ENCODE measurements at regions of chr7 and their contacts with region 1.

Region 1: DNA sequence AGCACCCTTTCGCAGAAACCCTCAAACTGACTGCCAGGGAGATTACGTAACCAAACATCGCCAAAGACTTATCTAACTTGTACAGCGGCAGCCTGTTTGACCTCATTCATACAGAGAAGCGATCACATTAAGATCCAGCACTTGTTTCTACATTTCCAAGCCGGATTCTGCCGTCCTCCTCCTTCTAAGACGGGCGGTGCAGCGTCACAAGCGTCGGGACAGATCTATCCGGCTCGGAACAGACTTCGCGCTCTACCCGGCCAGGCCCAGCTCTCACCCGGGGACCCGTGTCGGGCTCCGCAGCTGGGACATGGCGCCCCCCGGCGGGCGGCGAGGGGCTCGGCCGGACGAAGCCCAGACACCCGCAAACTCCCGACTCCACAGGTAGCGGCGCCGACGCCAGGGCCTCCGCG is 373 bp downstream of the H2AZ2 start:
- DNase-seq: peak; percentile 91
- H3K4me3 Mint-ChIP-seq: peak overlapping the region; percentile 93
- H3K27ac Mint-ChIP-seq: peak overlapping the region; percentile 95
- H3K4me1 Mint-ChIP-seq: peaks cover 37% of the 10 kb centered on the region
- H3K27me3 Mint-ChIP-seq: peaks cover 2% of the 10 kb centered on the region

Region 2: DNA sequence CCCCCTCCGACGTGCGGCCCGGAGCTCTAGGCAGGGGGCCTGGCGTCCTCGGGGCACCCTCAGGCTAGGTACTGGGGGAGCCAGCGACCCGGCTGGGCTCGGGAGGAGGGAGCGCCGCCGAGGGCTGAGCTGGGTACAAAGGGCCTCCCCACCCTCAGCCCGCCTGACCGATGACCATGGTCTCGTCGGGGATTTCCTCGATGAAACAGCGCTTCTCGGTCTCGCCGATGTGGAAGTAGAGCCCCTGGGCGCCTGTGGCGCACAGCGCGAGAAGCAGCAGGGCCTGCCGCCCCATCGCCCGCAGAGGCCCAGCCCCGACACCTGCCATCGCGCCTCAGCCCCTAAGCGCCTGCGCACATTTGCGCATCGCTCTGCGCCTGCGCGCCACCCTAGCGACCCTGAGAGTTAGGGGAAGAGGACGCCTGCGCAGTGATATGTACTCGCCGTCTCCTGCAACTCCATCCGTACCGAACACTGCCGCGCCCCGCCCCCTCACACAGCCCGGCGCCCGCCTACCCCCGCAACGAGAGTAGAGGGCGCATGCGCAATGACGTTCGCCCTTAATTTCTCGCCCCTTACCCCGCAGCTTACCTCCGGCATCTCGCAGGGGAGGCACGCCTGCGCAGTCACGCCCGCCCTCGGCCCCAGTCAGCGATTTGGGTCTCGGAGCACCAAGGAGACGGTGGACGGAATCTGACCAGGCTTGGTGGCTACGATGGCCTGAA is 265.5 kb before region 1 on chr7 and contains the start of gene TMED4:
- CTCF ChIA-PET with region 1: interaction called, 9 read pairs
- POLR2A ChIA-PET with region 1: interaction called, 27 read pairs
- intact Hi-C with region 1: loop called (anchors 1 kb)
- DNase-seq: peak; percentile 100
- H3K4me3 Mint-ChIP-seq: peak within 1 kb of the TSS; percentile 91
- H3K27ac Mint-ChIP-seq: peak within 1 kb of the TSS; percentile 91
- H3K4me1 Mint-ChIP-seq: peaks cover 29% of the 10 kb centered on the region
- H3K27me3 Mint-ChIP-seq: peaks cover 3% of the 10 kb centered on the region
- total RNA-seq, gene TMED4: 74.8 to 79.1 TPM

Region 3: DNA sequence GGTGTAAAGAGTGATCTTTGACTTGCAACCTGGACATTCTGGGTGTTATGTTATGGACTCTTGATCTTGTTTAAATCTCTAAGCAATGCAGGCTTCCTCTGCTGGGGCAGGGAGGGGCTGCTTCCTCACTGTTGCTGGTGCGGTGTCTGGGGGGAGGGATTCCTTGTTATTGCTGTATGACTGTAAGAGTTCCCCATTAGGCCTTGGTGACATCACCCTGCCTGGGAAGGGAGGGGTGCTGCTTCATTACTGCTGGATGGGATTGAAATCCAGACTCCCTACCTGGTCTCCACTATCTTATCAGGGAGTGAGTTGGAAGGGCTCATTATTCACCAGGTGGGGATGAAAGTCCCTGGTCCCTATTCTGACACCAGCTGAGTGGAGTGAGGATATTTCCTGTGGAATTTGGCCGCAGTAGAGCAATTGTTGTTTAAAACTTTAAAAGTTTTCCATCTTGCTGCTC is 232.3 kb before region 1 on chr7:
- CTCF ChIA-PET with region 1: no interaction called
- POLR2A ChIA-PET with region 1: no interaction called
- intact Hi-C with region 1: loop called (anchors 1 kb)
- DNase-seq: peak; percentile 66
- H3K4me3 Mint-ChIP-seq: peak overlapping the region; percentile 1
- H3K27ac Mint-ChIP-seq: peak overlapping the region; percentile 65
- H3K4me1 Mint-ChIP-seq: peaks cover 63% of the 10 kb centered on the region
- H3K27me3 Mint-ChIP-seq: no peaks in the 10 kb centered on the region

Region 4: DNA sequence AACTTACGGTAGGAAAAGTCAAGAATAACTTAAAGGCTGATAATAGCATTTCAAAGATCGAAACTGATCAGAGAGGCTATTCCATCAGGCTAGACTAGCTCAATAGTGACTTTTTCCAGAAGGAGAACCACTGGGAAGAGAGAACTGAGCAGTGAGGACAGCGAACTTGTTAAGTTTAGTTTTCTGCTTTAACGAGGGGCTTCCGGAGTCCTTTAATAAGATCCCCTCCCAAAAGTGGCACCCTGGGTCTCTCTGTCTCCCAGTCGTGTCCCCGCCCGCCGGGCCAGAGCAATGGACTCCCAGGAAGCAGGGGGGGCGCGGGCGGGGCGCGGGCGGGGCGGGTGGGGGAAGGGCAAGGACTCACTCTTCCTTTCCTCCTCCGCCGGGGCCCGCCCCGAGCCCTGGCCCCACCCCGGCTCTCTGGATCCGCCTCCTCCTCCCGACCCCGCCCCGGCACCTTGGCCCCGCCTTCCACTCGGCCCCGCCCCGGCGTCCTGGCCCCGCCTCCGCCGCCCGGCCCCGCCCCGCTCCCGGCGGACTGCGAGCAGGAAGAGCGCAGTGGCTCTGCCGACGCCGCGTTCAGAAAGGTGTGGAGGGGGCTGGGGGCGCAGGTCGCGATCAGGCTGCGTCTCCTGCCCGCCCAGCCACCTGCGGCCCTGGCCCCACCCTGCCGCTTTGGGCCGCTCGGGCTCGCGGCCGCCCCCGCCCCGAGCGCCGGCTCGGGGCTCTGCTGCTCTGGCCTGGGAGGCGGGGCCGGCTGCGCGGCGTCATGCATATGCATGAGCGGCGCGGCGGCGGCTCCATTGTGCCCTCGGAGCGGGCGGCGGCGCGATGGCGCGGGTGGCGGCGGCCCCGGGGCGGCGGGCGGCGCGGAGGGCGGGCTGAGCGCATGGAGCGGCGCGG is 99.2 kb before region 1 on chr7 and contains the start of gene ZMIZ2:
- CTCF ChIA-PET with region 1: interaction called, 6 read pairs
- POLR2A ChIA-PET with region 1: interaction called, 9 read pairs
- intact Hi-C with region 1: loop called (anchors 2 kb)
- DNase-seq: peak; percentile 93
- H3K4me3 Mint-ChIP-seq: peak within 1 kb of the TSS; percentile 81
- H3K27ac Mint-ChIP-seq: peak within 1 kb of the TSS; percentile 87
- H3K4me1 Mint-ChIP-seq: peaks cover 39% of the 10 kb centered on the region
- H3K27me3 Mint-ChIP-seq: no peaks in the 10 kb centered on the region
- total RNA-seq, gene ZMIZ2: 84.7 to 92.3 TPM

Region 5: DNA sequence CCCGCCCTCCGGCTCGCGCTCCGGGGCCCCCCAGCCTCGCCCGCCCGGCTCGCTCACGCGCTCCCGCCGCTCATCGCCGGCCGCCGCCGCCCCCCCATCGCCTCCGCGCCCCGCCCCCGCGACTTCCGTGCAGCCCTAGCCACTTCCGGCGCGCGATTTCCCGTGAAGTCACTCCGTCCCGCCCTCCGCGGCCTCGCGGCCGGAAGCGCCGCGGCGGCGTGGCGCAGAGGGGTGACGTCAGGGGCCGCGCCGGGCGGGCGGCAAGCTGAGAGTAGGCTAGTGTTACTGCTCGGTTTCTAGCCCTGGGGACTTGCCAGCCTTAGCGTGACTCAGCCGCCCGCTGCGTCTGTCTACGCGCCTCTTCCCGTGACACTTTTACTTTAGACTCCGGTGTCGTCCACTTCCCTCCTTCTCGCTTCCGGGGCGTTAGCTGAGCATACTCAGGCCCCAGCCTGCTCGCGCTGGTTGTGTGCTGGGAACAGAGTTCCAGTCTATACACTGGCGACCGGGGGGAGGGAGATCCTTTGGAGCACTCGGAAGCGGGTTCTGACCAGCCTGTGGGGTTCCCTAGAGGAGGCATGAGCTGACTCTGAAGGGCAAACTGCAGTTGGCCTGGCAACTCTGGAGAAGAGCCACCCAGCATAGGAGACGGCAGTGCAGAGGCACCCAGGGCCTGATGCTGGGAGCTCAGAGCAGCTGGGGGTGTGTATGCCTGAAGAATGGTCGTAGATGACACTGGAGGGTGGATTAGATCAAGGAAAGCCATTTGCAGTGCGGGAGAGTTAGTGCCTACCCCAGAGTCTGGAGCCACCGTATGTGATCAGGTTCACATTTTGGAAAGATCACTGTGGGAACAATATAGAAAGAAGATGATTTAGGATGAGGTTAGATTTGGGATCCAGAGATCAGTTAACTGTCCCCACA is 38.1 kb after region 1 on chr7 and contains the start of gene PURB:
- CTCF ChIA-PET with region 1: interaction called, 17 read pairs
- POLR2A ChIA-PET with region 1: interaction called, 44 read pairs
- intact Hi-C with region 1: loop called (anchors 1 kb)
- DNase-seq: peak; percentile 98
- H3K4me3 Mint-ChIP-seq: peak within 1 kb of the TSS; percentile 91
- H3K27ac Mint-ChIP-seq: peak within 1 kb of the TSS; percentile 98
- H3K4me1 Mint-ChIP-seq: peaks cover 58% of the 10 kb centered on the region
- H3K27me3 Mint-ChIP-seq: no peaks in the 10 kb centered on the region
- total RNA-seq, gene PURB: 21.5 to 23.6 TPM

Region 6: DNA sequence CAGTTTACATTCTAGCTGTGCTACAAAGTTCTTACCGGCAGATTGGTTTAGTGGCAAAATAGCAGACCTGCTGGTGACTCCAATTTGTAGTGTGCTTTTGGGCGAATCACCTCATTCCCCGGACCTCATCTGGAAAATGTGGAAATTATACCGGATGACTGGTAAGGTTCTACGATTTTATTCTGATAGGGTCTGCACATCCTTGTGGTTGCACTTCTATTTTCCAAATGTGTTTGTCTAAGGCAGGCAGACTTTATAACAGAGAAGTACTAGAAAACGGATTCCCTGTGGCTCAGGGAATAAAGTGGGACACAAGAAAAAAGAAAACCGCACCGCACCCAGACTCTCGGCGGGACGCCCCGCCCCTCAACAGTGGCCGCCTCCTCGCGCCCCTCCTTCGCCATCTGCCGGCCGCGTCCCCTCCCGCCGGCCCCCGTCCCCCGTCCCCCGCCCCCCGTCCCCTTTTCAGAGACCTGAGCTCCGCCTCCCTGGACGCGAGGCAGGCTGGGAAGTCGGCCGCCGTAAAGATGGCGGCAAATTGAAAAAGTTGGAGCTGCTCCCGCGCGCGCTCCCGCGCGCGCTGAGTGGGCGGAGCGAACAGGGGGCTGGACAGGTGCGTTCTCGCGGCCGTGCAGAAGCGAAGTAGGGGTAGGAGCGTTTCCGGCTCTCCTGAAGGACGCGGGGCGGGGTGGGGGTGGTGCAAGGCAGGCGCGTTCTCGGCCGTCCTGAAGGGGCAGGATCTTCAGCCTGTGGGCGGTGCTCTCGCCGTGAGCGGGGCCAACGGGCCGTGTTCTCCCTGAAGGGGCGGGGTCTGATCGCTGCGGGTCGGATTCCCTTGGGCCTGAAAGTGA is 152.0 kb after region 1 on chr7:
- CTCF ChIA-PET with region 1: no interaction called
- POLR2A ChIA-PET with region 1: interaction called, 6 read pairs
- intact Hi-C with region 1: loop called (anchors 1 kb)
- DNase-seq: peak; percentile 100
- H3K4me3 Mint-ChIP-seq: peak overlapping the region; percentile 89
- H3K27ac Mint-ChIP-seq: peak overlapping the region; percentile 95
- H3K4me1 Mint-ChIP-seq: peaks cover 58% of the 10 kb centered on the region
- H3K27me3 Mint-ChIP-seq: no peaks in the 10 kb centered on the region

Region 7: DNA sequence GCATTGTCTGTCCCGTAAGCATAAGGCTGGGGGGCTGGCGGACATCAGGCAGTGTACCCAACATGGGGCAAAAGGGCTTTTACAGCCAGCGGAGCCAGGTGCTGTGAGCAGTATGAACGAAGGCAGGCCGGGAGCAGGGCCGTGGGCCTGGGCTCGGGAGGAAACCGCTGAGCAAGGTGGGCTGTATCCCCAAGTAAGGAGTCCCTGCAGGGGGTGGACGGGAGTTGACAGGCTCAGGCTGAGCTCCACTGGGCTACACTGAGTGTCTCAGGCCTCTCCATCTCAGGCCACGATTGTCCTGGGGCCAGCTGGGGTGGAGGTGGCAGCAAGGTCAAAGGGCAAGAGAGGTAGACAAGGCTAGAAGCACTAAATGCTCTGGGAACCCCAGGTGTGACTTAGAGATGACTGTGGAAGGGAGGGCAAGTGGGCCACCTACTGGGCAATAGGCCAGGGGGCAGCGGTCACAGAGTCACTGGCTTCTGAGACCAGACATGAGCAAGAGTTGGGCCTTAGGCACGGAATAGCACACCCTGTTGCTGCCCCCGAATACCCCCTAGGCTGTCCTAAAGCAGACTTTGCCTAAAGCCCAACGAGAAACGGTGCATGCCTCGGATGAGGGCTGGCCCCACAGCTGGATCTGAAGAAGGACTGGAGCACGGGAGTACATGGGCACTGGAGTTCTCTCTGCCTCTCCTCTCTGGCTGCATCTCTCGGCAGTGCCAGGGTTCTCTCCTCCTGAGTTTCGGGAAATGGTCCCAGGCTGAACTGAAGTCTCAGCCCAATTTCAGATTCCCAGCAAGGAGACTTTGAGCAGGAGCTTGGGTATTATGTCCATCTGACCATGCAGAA is 299.2 kb after region 1 on chr7:
- CTCF ChIA-PET with region 1: no interaction called
- POLR2A ChIA-PET with region 1: no interaction called
- intact Hi-C with region 1: no loop called
- DNase-seq: no peak
- H3K4me3 Mint-ChIP-seq: no peak overlapping the region
- H3K27ac Mint-ChIP-seq: no peak overlapping the region
- H3K4me1 Mint-ChIP-seq: no peaks in the 10 kb centered on the region
- H3K27me3 Mint-ChIP-seq: peaks cover 7% of the 10 kb centered on the region